ENCODE measurements at regions of chr6 and their contacts with region 1.

Region 1: DNA sequence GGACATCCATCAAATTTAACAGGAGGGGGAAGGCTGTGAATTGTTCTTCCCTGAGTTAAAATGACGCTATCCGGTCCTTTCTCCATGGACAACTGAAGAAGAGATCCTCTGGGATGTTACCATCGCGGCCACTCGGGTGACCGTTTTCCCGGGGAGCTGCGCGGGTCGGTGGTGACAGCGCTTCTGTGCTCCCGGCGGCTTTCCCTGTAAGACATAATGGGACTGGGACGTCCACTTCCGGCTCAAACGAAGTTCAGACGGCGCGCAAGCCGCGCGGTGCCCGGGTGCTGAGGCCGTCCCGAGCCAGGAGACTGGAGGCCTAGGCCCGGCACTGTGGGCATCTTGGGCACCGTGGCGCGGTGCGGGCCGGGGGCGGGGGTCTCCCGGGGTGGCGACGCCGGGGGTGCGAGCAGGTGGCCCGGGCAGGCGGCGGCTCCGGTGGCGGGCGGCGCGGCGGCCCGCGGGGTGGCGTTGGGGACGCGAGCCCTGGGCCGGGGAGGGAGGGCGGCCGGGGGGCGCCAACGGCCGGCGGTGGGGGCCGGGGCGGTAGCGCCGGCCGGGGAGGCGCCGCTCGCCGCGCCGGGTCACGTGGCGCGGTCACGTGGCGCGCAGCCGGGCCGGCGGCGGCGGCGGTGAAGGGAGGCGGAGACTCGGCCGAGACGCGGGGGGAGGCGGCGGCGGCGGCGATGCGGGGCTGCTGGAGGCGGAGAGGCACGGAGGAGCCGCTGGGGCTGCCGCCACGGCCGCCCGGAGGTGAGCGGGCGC is 63.6 kb downstream of the GTF2H5 start:
- DNase-seq: peak; percentile 72
- H3K4me3 Mint-ChIP-seq: peak overlapping the region; percentile 80
- H3K27ac Mint-ChIP-seq: peak overlapping the region; percentile 67
- H3K4me1 Mint-ChIP-seq: peaks cover 26% of the 10 kb centered on the region
- H3K27me3 Mint-ChIP-seq: peaks cover 2% of the 10 kb centered on the region

Region 2: DNA sequence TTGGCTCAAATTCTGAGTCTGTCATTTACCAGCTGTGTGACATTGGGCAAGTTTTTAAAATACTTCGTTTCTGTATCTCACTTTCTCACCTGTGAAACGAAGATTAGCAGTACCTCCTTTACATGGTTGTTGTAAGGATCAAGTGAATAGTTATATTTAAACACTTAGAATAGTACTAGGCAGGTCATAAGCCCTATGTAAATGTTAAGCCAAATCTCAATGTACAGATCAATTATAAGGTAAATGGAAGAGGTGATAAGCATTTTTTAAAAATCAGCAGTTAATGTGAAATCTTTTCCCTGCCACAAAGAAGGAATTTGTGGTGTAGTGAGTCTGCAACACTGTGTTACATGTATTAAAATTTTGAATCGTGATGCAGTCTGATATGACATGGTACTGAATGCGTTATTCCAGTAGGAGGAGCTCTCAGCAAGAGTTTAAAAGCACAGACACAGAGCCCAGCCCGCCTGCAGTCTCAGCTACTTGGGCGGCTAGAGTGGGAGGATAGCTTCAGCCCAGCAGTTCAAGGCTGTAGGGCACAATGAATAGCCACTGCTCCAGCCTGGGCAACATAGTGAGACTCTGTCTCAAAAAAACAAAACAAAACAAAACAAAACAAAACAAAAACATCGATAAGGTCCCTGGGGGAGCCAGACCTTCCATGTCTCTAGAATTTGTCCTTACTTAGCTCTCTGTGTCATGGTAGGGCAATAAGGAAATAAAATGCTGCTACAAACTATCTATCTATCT is 17.6 kb before region 1 on chr6:
- intact Hi-C with region 1: loop called (anchors 2 kb)
- DNase-seq: peak; percentile 51
- H3K4me3 Mint-ChIP-seq: no peak overlapping the region
- H3K27ac Mint-ChIP-seq: no peak overlapping the region
- H3K4me1 Mint-ChIP-seq: peaks cover 25% of the 10 kb centered on the region
- H3K27me3 Mint-ChIP-seq: no peaks in the 10 kb centered on the region

Region 3: DNA sequence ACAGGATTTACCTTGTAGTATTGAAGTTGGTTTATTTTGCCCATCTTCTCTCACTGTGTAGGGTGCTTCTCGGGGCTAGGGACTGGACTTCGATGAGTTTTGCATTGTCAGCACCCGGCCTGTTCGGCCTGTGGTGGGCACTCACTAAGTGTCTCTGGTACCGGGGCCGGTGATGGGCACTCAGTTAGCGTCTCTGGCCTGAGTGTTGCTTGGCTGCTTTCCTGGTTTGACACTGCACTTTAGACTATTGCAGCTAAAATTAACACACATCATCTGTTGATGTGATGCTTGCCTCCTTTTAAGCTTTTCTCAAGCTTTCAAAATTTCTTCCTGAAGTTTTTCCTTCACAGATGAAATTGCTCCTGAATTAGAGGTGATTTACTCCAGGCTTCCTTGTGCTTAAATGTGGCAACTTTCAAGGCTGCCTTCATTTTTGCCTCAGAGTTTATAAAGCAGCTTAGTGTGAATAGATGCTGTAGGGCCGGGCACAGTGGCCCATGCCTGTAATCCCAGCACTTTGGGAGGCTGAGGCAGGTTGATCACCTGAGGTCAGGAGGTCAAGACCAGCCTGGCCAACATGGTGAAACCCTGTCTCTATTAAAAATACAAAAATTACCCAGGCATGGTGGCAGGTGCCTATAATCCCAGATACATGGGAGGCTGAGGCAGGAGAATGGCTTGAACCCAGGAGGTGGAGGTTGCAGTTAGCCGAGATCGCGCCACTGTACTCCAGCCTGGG is 38.8 kb after region 1 on chr6:
- intact Hi-C with region 1: loop called (anchors 1 kb)
- DNase-seq: no peak
- H3K4me3 Mint-ChIP-seq: peak overlapping the region; percentile 20
- H3K27ac Mint-ChIP-seq: no peak overlapping the region
- H3K4me1 Mint-ChIP-seq: peaks cover 33% of the 10 kb centered on the region
- H3K27me3 Mint-ChIP-seq: no peaks in the 10 kb centered on the region

Region 4: GRCh38 chr6:158290659-158291058 is 58.9 kb after region 1 on chr6:
- intact Hi-C with region 1: loop called (anchors 5 kb)
- DNase-seq: peak; percentile 52
- H3K4me3 Mint-ChIP-seq: peak overlapping the region; percentile 64
- H3K27ac Mint-ChIP-seq: peak overlapping the region; percentile 79
- H3K4me1 Mint-ChIP-seq: peaks cover 42% of the 10 kb centered on the region
- H3K27me3 Mint-ChIP-seq: no peaks in the 10 kb centered on the region

Region 5: GRCh38 chr6:158536084-158536890 is 304.6 kb after region 1 on chr6:
- intact Hi-C with region 1: loop called (anchors 5 kb)
- DNase-seq: peak; percentile 62
- H3K4me3 Mint-ChIP-seq: peak overlapping the region; percentile 78
- H3K27ac Mint-ChIP-seq: no peak overlapping the region
- H3K4me1 Mint-ChIP-seq: no peaks in the 10 kb centered on the region
- H3K27me3 Mint-ChIP-seq: peaks cover 44% of the 10 kb centered on the region

Region 6: GRCh38 chr6:158559895-158560835 is 328.4 kb after region 1 on chr6 and contains the start of gene TMEM181:
- intact Hi-C with region 1: loop called (anchors 1 kb)
- DNase-seq: peak; percentile 84
- H3K4me3 Mint-ChIP-seq: peak within 1 kb of the TSS; percentile 97
- H3K27ac Mint-ChIP-seq: peak within 1 kb of the TSS; percentile 95
- H3K4me1 Mint-ChIP-seq: peaks cover 32% of the 10 kb centered on the region
- H3K27me3 Mint-ChIP-seq: peaks cover 3% of the 10 kb centered on the region
- total RNA-seq, gene TMEM181: 17.0 and 17.7 TPM in 2 replicates

Region 7: GRCh38 chr6:158644231-158645063 is 412.7 kb after region 1 on chr6 and contains the start of gene DYNLT1:
- intact Hi-C with region 1: loop called (anchors 5 kb)
- DNase-seq: peak; percentile 91
- H3K4me3 Mint-ChIP-seq: peak within 1 kb of the TSS; percentile 99
- H3K27ac Mint-ChIP-seq: peak within 1 kb of the TSS; percentile 97
- H3K4me1 Mint-ChIP-seq: peaks cover 81% of the 10 kb centered on the region
- H3K27me3 Mint-ChIP-seq: no peaks in the 10 kb centered on the region
- total RNA-seq, gene DYNLT1: 103 and 105 TPM in 2 replicates

Measured in activated T-helper 1 cell treated with anti-CD3 and anti-CD28 coated beads, Interleukin-12 subunit alpha, Interleukin-12 subunit beta, Interleukin-2, Interleukin-4 antibody, amounts not matched to agents 30 ng/mL and 10 ng/mL and 1 ng/mL, durations not matched to agents 14 hours and 24 hours and 36 hours (primary cell).